Gastrocnemius medialis (tissue), 4 donors: ENCODE measurements at regions of chr7 and their contacts with region 1.

Region 1: DNA sequence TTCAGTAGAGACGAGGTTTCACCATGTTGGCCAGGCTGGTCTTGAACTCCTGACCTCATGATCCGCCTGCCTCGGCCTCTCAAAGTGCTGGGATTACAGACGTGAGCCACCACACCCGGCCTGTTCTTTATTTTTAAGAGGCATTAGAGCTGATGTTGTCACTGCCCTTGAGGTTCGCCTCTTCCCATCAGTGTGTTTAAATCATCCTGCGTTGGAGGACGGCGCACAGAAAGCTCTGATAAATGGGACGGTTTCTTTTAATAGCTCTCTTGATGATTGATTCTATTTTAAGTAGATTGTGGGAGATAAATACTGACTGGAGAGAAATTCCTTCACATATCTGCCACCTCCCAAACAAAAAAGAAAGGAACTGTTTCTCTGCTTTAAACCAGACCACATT is 29.0 kb downstream of the UPP1 start:
- DNase-seq: no peak
- ATAC-seq: no peak
- H3K4me3 ChIP-seq: no peak overlapping the region
- H3K27ac ChIP-seq: no peak overlapping the region
- H3K4me1 ChIP-seq: no peaks in the 10 kb centered on the region
- H3K27me3 ChIP-seq: no peaks in the 10 kb centered on the region
- CTCF ChIP-seq: no peak
- POLR2A ChIP-seq: no peak

Region 2: DNA sequence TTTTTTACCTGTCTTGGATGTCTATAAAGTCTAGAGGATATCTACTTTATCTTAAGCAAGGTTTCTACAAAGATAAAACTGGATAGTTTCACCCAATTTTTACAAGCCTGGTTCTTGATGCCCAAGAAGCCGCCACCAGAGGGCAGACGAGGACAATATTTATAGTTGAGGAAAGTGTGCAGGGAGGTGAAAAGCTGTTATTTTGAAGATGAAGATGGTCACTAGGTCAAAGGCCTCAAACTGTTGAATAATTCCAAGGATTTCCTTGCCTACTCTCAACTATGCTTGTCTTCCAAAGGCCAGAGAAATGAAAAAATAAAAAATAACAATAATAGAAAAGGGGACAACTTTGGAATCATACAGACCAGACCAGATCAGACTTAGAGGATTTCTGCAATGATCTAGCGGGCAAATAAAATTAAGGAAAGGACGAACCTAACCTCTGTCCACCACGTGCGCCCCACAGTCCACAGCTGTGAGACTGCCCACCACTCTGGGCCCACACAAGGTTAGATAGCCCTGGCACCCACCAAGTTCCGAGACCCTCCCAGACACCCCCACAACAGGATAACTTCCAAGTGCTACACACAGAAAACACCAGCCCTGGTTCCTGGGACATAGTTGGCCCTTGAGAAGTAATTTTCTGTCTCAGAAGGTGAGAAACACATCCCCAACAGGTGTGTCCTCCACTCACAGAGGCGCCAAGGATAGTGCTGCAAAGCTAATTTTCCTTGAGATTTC is 172.6 kb before region 1 on chr7:
- in situ Hi-C with region 1: loop called in 2 of 4 experiments (anchors 5 to 10 kb)
- intact Hi-C with region 1: no loop called
- DNase-seq: peak; percentile 42 to 45
- ATAC-seq: peak in 1 of 2 donors; percentile 49
- H3K4me3 ChIP-seq: no peak overlapping the region
- H3K27ac ChIP-seq: peak overlapping the region; percentile 36 to 68 (median 58)
- H3K4me1 ChIP-seq: peaks cover 0 to 2% of the 10 kb centered on the region in 2 donors
- H3K27me3 ChIP-seq: no peaks in the 10 kb centered on the region
- CTCF ChIP-seq: peak; percentile 48 to 79 (median 64)
- POLR2A ChIP-seq: no peak

Region 3: DNA sequence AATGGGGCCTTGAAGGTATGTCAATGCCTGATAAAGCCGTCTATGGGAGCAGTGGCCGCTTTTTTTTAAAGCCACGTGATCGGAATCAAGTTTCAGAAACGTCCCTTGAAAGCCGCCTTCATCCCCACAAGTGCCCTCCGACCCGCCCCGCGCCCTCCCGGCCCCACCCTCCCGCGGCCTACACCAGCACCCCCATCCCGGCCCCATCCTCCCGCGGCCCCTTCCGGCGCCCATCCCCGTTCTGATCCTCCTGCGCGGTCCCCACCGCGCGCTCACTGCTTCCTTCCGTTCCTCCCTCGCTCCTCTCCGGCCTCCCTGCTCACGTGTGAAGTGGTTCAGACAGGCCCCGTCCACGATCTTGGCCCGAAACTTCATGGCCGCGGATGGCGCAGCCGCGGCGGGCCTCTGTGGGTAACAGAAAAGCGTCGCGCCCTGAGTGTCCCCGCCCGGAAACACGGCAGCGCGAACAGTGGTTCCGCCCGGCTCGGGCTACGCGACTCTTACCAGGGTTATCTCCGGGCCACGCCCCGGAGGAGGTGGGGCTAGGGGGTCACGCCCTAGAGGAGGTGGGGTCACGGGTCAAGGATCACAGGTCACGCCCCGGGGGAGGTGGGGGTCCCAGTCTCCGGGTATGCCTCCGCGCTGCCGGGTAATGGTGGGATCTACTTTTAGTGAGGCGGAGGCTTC is 138.8 kb before region 1 on chr7 and contains the start of gene HUS1:
- in situ Hi-C with region 1: no loop called
- intact Hi-C with region 1: no loop called
- DNase-seq: peak; percentile 79 to 88
- ATAC-seq: peak; percentile 90 to 96
- H3K4me3 ChIP-seq: peak within 1 kb of the TSS; percentile 68 to 90 (median 74)
- H3K27ac ChIP-seq: peak within 1 kb of the TSS; percentile 78 to 82 (median 82)
- H3K4me1 ChIP-seq: peaks cover 8 to 9% of the 10 kb centered on the region in 2 donors
- H3K27me3 ChIP-seq: no peaks in the 10 kb centered on the region
- CTCF ChIP-seq: no peak
- POLR2A ChIP-seq: peak; percentile 60 to 61
- total RNA-seq, gene HUS1: 18.3 to 33.0 (median 23.0) TPM

Region 4: DNA sequence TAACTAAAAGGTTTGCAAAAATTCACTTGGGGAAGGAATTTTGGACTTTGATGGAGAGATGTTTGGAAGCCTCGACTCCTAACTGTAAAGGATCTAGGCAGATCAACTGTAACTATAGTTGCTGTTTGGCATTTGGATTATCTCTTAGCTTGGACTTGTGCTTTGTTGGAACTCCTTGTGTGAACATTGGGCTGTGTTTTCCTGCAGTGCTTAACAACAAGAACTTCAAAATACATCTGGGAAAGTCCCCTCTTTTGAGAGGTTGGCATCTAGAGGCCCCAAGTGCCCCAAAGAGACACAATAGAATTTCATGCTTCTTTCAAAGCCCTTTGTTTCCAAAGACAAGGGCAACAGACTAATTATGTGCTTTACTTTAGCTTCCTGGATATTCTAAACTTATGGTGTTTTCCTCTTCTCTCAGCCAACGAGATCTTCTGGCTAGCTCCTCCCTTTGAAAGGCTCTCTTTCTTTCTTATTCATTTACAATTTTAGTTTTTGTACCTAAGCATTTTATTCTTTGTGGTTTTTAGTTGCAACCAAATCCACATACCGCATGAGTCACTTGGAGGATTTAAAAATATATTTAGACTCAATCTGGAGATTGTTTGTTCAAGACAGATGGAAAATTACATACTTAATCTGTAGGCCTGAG is 64.8 kb after region 1 on chr7:
- in situ Hi-C with region 1: no loop called
- intact Hi-C with region 1: no loop called
- DNase-seq: no peak
- ATAC-seq: no peak
- H3K4me3 ChIP-seq: no peak overlapping the region
- H3K27ac ChIP-seq: no peak overlapping the region
- H3K4me1 ChIP-seq: no peaks in the 10 kb centered on the region
- H3K27me3 ChIP-seq: no peaks in the 10 kb centered on the region
- CTCF ChIP-seq: no peak
- POLR2A ChIP-seq: no peak